ENCODE measurements at regions of chr19 and their contacts with region 1.

Region 1: GRCh38 chr19:46537136-46538097 is 41.8 kb upstream of the PNMA8B start:
- DNase-seq: peak; percentile 73
- ATAC-seq: peak; percentile 73
- H3K4me3 ChIP-seq: no peak overlapping the region
- H3K4me3 Mint-ChIP-seq: no peak overlapping the region
- H3K27ac ChIP-seq: no peak overlapping the region
- H3K27ac Mint-ChIP-seq: no peak overlapping the region
- H3K4me1 ChIP-seq: no peaks in the 10 kb centered on the region
- H3K4me1 Mint-ChIP-seq: no peaks in the 10 kb centered on the region
- H3K27me3 ChIP-seq: peaks cover 0 to 4% (median 0%) of the 10 kb centered on the region in 4 experiments
- H3K27me3 Mint-ChIP-seq: peaks cover 4% of the 10 kb centered on the region
- CTCF ChIP-seq: peak; percentile 98

Region 2: DNA sequence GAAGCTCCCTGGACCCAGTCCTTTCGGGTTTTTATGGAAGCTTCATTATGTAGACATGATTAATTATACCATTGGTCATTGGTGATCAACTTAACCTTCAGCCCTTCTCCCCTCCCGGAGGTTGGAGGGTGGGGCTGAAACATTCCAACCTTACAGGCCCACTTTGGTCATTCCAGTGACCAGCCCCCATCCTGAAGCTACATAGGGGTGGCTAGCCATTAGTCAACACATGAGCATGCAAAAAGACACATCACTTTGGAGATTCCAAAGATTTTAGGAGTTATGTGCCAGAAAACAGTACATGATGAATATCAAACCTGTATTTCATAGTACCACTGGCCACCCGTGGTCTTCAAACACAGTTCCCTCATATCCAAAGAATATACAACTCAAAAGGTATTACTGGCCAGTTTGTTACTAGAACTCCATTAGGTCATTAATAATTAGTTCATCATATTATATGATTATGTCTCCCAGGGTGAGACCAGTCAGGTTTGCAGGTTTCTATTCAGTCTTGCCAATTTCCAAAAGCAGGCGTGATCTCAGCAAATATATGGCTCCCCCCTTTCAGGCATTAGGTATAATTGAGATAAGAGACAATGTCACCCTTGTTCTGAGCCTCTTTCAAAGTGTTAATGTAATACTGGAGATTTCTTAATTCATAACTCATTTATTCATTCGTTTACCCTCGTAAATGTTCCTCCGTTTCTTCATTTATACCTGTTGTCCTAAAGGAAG is 179.4 kb before region 1 on chr19:
- CTCF ChIA-PET with region 1: no interaction called
- POLR2A ChIA-PET with region 1: no interaction called
- intact Hi-C with region 1: no loop called
- DNase-seq: no peak
- ATAC-seq: no peak
- H3K4me3 ChIP-seq: no peak overlapping the region
- H3K4me3 Mint-ChIP-seq: no peak overlapping the region
- H3K27ac ChIP-seq: no peak overlapping the region
- H3K27ac Mint-ChIP-seq: no peak overlapping the region
- H3K4me1 ChIP-seq: peaks cover 6 to 8% of the 10 kb centered on the region in 2 donors
- H3K4me1 Mint-ChIP-seq: peaks cover 15% of the 10 kb centered on the region
- H3K27me3 ChIP-seq: no peaks in the 10 kb centered on the region
- H3K27me3 Mint-ChIP-seq: no peaks in the 10 kb centered on the region
- CTCF ChIP-seq: no peak

Region 3: DNA sequence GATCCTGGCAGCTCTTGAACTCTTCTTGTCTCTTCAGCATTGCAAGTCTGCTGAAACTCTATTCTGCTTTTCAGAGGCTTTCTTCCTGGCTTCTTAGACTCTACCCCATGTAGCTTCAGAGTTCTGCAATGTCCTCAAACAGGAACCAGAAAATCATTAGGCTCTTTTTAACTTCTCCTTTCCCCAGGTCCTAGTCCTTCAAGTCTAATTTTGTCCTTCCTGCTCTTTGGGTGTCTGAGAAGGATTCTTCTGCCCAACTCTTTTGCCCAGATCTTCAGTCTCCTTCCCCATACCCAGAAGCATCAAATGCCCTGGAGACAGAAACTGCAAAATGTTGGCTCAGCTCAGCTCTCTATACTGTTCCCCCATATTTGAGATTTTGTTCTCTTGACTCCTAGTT is 13.7 kb after region 1 on chr19:
- CTCF ChIA-PET with region 1: interaction called, 25 read pairs
- POLR2A ChIA-PET with region 1: no interaction called
- intact Hi-C with region 1: no loop called
- DNase-seq: no peak
- ATAC-seq: no peak
- H3K4me3 ChIP-seq: no peak overlapping the region
- H3K4me3 Mint-ChIP-seq: no peak overlapping the region
- H3K27ac ChIP-seq: no peak overlapping the region
- H3K27ac Mint-ChIP-seq: no peak overlapping the region
- H3K4me1 ChIP-seq: no peaks in the 10 kb centered on the region
- H3K4me1 Mint-ChIP-seq: no peaks in the 10 kb centered on the region
- H3K27me3 ChIP-seq: peaks cover 0 to 12% (median 0%) of the 10 kb centered on the region in 4 experiments
- H3K27me3 Mint-ChIP-seq: peaks cover 24% of the 10 kb centered on the region
- CTCF ChIP-seq: no peak

Measured in B cell (primary cell).